Activated CD4-positive, alpha-beta T cell treated with anti-CD3 and anti-CD28 coated beads, Interleukin-2, amount 10 ng/mL, durations not matched to agents 24 days and 14 days (primary cell): ENCODE measurements at regions of chr3 and their contacts with region 1.

Region 1: DNA sequence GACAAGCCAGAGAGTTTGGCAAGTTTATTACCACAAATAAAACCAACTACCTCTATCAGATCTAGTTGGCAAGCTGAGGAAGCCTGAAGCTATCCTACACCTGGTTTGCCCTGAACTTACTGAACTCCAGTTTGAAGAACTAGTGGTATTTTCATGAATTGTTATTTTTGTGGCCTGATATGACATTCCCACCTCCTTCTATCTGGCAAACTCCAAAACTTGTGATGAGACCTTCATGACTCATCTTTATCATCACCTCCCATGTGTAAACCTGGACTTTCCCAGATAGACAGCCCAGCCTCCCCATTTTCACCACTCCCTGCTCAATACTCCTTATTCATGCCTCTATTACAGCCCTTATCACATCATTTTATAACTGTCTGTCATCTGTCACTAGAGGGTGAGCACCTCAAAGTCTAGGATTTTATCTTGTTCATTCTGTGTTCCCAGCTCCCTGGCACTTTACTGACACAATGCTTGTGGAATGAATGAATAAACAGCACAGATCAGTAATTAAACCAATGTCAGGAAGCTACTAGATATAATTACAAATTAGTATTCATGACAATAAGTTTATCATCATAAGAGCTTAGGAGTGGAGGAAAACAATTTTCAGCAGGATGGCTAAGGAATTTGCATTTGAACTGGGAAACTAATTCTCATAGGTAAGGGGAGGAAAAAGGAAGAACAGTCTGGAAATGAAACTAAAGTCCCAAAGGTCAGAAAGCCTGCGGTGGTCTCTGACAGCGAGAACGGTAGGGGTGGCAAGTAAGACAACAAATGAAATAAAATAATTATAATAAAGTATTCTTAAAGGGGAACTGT is 13.2 kb upstream of the TRANK1 start:
- DNase-seq: no peak
- H3K4me3 Mint-ChIP-seq: peak overlapping the region; percentile 6
- H3K27ac Mint-ChIP-seq: peak overlapping the region; percentile 58
- H3K4me1 Mint-ChIP-seq: peaks cover 7% of the 10 kb centered on the region
- H3K27me3 Mint-ChIP-seq: peaks cover 4% of the 10 kb centered on the region

Region 2: DNA sequence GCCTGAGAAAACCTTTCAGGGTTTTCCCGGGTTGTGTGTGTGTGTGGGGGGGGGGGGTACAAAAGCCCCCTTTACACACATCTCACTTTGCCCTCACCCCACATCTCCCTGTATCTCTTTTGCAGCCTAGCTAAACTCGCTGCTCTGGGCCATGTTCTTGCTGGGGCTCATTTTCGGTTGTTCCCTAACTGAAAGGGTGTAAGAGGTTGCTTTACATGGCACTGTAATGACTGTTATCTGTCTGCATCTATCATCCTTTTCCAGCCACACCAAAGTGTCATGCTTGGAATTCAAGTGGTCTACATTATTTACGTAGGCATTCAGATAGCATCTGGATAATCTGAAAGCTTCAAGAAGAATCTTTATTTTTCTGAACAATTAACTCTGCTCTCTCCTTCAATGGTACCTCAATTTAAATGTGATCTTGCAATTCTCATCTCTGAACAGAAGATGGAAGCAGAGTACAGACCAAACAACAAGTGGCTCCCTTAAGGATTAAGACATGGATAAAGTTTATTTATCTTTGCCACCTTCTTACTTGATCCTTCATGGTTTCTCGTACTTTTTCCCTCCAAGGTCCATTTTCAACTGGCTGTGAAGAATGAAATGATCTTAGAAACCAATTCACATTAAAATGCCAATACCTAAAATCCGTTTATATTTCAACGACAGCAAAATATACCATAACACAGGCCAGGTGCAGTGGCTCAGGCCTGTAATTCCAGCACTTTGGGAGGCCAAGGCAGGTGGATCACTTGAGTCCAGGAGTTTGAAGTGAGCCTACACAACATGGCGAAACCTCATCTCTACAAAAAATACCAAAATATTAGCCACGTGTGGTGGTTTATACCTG is 228.6 kb before region 1 on chr3:
- intact Hi-C with region 1: loop called (anchors 1 kb)
- DNase-seq: no peak
- H3K4me3 Mint-ChIP-seq: no peak overlapping the region
- H3K27ac Mint-ChIP-seq: no peak overlapping the region
- H3K4me1 Mint-ChIP-seq: no peaks in the 10 kb centered on the region
- H3K27me3 Mint-ChIP-seq: peaks cover 10% of the 10 kb centered on the region

Region 3: GRCh38 chr3:36843065-36844051 is 114.7 kb before region 1 on chr3:
- intact Hi-C with region 1: loop called (anchors 1 kb)
- DNase-seq: peak; percentile 84
- H3K4me3 Mint-ChIP-seq: peak overlapping the region; percentile 36
- H3K27ac Mint-ChIP-seq: no peak overlapping the region
- H3K4me1 Mint-ChIP-seq: peaks cover 22% of the 10 kb centered on the region
- H3K27me3 Mint-ChIP-seq: no peaks in the 10 kb centered on the region

Region 4: DNA sequence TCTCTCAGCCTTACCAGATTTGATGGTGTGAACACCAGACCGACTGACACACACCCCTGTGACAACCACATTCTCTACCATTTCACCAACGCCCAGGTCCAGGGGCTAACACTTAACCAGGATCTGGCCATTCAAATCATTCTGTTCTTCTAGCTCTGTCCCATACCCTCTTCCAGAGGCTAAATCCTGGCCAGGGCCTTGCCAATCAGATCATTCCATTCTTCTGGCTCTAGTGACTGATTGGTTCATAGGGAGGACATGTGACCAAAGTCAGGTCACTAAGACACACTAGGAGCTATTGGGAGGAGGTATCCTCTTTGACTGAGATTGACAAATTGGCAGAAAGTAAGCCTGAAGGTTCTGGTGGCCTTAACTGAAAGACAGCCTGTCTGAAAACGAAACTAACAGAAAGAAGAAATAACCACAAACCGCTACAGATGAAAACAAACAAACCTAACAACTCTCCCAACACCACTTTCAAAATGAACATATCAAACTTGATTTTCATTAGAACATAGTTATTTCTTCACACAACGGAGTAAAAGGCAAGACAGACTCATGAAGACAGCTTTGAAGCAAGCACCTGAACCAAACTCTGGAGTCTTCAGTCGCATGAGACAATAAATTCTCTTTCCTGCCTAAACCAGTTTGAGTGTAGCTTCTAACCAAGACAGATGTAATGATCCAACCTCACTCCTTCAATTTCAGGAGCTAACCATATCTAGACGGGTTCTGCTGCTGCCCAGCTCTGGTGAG is 81.7 kb before region 1 on chr3:
- intact Hi-C with region 1: loop called (anchors 2 kb)
- DNase-seq: peak; percentile 83
- H3K4me3 Mint-ChIP-seq: peak overlapping the region; percentile 60
- H3K27ac Mint-ChIP-seq: peak overlapping the region; percentile 52
- H3K4me1 Mint-ChIP-seq: peaks cover 27% of the 10 kb centered on the region
- H3K27me3 Mint-ChIP-seq: peaks cover 2% of the 10 kb centered on the region

Region 5: DNA sequence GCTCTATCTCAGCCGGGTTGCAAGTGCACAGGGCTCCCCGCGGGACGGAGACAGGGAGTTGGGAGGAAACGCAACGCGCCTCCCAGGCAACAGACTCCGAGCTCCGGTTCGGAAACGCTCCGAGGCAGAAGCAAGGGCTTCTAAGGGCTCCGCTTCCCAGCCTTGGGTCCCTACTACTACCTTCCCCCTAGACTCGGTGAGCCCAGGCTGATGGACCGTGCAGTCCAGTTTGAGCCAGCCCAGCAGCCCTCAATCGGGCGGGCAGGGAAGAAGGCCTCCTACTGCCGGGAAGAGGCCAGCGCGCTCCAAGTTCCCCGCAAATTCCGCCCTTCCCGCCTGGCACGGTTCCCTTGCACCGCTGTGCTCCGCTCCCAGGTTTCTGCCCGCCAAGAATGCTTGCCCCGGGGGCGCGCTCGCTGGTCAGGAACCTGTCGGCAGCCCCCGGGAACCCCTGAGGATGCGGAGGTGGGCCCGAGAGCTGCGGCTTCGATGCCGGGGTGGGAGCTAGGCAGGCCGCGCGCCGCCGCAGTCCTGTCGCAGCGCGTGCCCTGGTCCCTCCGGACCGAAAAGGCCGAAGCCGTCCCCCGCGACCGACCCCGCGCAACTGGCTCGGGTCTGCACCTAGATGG is 13.9 kb before region 1 on chr3:
- intact Hi-C with region 1: loop called (anchors 1 kb)
- DNase-seq: peak; percentile 75
- H3K4me3 Mint-ChIP-seq: peak overlapping the region; percentile 76
- H3K27ac Mint-ChIP-seq: no peak overlapping the region
- H3K4me1 Mint-ChIP-seq: peaks cover 12% of the 10 kb centered on the region
- H3K27me3 Mint-ChIP-seq: peaks cover 14% of the 10 kb centered on the region